Endothelial cell of umbilical vein (primary cell): ENCODE measurements at regions of chr3 and their contacts with region 1.

Region 1: GRCh38 chr3:111080413-111080812 is 8.8 kb downstream of the NECTIN3 start:
- DNase-seq: peak; percentile 66
- H3K4me3 ChIP-seq: no peak overlapping the region
- H3K27ac ChIP-seq: no peak overlapping the region
- H3K4me1 ChIP-seq: peaks cover 2% of the 10 kb centered on the region
- H3K27me3 ChIP-seq: no peaks in the 10 kb centered on the region
- CTCF ChIP-seq: peak; percentile 30 to 33
- POLR2A ChIP-seq: no peak

Region 2: GRCh38 chr3:109275702-109276293 is 1804.6 kb before region 1 on chr3:
- CTCF ChIA-PET with region 1: interaction called, 11 read pairs
- POLR2A ChIA-PET with region 1: no interaction called
- dilution Hi-C with region 1: no loop called
- intact Hi-C with region 1: no loop called
- DNase-seq: peak; percentile 10
- H3K4me3 ChIP-seq: no peak overlapping the region
- H3K27ac ChIP-seq: no peak overlapping the region
- H3K4me1 ChIP-seq: no peaks in the 10 kb centered on the region
- H3K27me3 ChIP-seq: no peaks in the 10 kb centered on the region
- CTCF ChIP-seq: peak; percentile 25 to 42
- POLR2A ChIP-seq: no peak

Region 3: DNA sequence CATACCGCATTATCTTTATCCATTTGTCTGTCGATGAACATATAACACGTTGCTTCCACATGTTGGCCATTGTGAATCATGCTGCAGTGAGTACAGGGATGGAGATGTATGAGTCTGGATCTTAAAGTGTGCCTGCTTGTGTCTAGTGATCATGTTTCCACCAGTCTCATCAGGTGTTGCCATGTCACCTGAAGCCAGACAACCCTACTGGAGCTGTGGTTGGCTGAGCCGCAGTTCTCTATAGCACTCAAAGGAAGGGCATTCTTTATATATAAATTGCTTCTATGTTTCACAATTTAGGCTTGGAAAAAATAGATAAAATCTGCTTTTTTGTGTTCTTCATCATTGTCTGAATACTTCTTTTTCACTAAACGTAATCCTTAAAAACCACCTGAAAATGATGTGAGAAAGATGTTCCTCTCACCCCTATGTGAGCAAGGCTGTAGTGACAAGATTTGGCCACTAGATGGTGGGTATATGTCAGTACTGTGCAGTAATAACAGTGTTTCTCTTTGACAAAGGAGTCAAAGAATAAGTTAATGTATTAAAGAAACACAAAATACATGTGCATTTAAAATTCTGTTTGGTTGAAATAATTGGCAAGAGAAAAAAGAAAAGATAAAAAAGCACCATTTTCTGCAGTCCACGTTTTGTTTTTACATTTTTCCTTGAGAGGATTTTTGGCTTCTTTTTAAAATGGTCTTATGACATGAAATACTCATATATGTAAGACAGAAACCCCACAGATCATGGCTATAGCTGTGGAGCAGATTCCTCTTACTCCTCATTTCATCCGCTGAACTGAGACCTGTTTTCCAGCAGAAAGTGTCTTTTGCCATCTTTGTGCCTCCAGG is 1348.6 kb before region 1 on chr3:
- CTCF ChIA-PET with region 1: interaction called, 15 read pairs
- POLR2A ChIA-PET with region 1: no interaction called
- dilution Hi-C with region 1: no loop called
- intact Hi-C with region 1: no loop called
- DNase-seq: peak; percentile 51
- H3K4me3 ChIP-seq: no peak overlapping the region
- H3K27ac ChIP-seq: no peak overlapping the region
- H3K4me1 ChIP-seq: no peaks in the 10 kb centered on the region
- H3K27me3 ChIP-seq: no peaks in the 10 kb centered on the region
- CTCF ChIP-seq: peak; percentile 50
- POLR2A ChIP-seq: no peak

Region 4: GRCh38 chr3:111260878-111261277 is 180.5 kb after region 1 on chr3:
- CTCF ChIA-PET with region 1: no interaction called
- POLR2A ChIA-PET with region 1: no interaction called
- dilution Hi-C with region 1: no loop called
- intact Hi-C with region 1: no loop called
- DNase-seq: no peak
- H3K4me3 ChIP-seq: no peak overlapping the region
- H3K27ac ChIP-seq: no peak overlapping the region
- H3K4me1 ChIP-seq: no peaks in the 10 kb centered on the region
- H3K27me3 ChIP-seq: no peaks in the 10 kb centered on the region
- CTCF ChIP-seq: no peak
- POLR2A ChIP-seq: no peak